CD14-positive monocyte (primary cell): ENCODE measurements at regions of chr2 and their contacts with region 1.

Region 1: GRCh38 chr2:233075966-233076339 is 15.8 kb downstream of the INPP5D start:
- DNase-seq: peak; percentile 64 to 76 (median 70)
- H3K4me3 ChIP-seq: peak overlapping the region in 1 of 3 experiments; percentile 55
- H3K4me3 Mint-ChIP-seq: no peak overlapping the region
- H3K27ac ChIP-seq: peak overlapping the region; percentile 64 to 82
- H3K27ac Mint-ChIP-seq: no peak overlapping the region
- H3K4me1 ChIP-seq: peaks cover 75 to 85% of the 10 kb centered on the region in 2 donors
- H3K4me1 Mint-ChIP-seq: peaks cover 34% of the 10 kb centered on the region
- H3K27me3 ChIP-seq: no peaks in the 10 kb centered on the region
- H3K27me3 Mint-ChIP-seq: no peaks in the 10 kb centered on the region
- CTCF ChIP-seq: no peak

Region 2: GRCh38 chr2:233089851-233090250 is 13.9 kb after region 1 on chr2:
- intact Hi-C with region 1: loop called (anchors 2 kb)
- DNase-seq: no peak
- H3K4me3 ChIP-seq: no peak overlapping the region
- H3K4me3 Mint-ChIP-seq: no peak overlapping the region
- H3K27ac ChIP-seq: peak overlapping the region in 1 of 2 donors; percentile 95
- H3K27ac Mint-ChIP-seq: peak overlapping the region in 3 of 7 donors; percentile 33 to 75 (median 54)
- H3K4me1 ChIP-seq: peaks cover 80 to 83% of the 10 kb centered on the region in 2 donors
- H3K4me1 Mint-ChIP-seq: peaks cover 86% of the 10 kb centered on the region
- H3K27me3 ChIP-seq: no peaks in the 10 kb centered on the region
- H3K27me3 Mint-ChIP-seq: peaks cover 0 to 1% (median 0%) of the 10 kb centered on the region in 3 donors
- CTCF ChIP-seq: no peak

Region 3: GRCh38 chr2:233142355-233142897 is 66.5 kb after region 1 on chr2:
- intact Hi-C with region 1: no loop called
- DNase-seq: no peak
- H3K4me3 ChIP-seq: no peak overlapping the region
- H3K4me3 Mint-ChIP-seq: no peak overlapping the region
- H3K27ac ChIP-seq: peak overlapping the region in 1 of 2 donors; percentile 57
- H3K27ac Mint-ChIP-seq: peak overlapping the region in 5 of 7 donors; percentile 10 to 75 (median 44)
- H3K4me1 ChIP-seq: no peaks in the 10 kb centered on the region
- H3K4me1 Mint-ChIP-seq: no peaks in the 10 kb centered on the region
- H3K27me3 ChIP-seq: no peaks in the 10 kb centered on the region
- H3K27me3 Mint-ChIP-seq: no peaks in the 10 kb centered on the region
- CTCF ChIP-seq: no peak

Region 4: DNA sequence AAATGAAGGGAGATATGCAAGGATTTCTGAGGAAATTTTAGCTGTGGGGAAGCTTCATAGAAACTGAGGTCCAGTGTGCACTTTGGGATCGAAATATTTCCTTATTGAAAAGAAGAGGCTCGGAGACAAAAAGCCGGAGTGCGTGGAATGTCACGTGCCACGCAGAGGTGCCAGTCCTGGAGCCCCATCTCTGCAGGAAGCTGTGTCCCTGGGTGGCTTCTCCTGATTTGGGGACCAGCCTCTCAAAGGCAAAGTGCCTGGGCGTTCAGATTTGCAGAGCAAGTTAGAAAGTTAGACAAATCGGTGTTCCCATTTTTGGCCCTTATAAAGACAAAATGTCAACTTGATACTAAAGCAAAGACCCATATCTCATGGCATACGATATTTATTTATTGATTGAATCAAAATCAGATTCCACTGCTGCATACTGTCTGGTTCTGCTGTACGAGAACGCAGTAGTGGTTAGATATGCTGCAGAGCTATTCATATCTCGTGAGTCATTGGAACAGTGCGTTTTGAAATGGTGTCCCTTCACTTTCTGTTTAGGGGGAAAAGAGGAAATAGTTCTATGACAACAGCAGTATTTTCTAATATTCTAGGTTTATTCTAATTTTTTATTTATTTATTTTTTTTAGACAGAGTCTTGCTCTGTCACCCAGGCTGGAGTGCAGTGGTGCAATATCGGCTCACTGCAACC is 166.4 kb after region 1 on chr2:
- intact Hi-C with region 1: loop called in 1 of 2 experiments (anchors 5 kb)
- DNase-seq: peak; percentile 85 to 94 (median 91)
- H3K4me3 ChIP-seq: peak overlapping the region in 1 of 3 experiments; percentile 61
- H3K4me3 Mint-ChIP-seq: peak overlapping the region; percentile 16 to 63
- H3K27ac ChIP-seq: peak overlapping the region; percentile 72 to 86
- H3K27ac Mint-ChIP-seq: peak overlapping the region; percentile 88 to 95 (median 94)
- H3K4me1 ChIP-seq: peaks cover 47 to 49% of the 10 kb centered on the region in 2 donors
- H3K4me1 Mint-ChIP-seq: peaks cover 50% of the 10 kb centered on the region
- H3K27me3 ChIP-seq: no peaks in the 10 kb centered on the region
- H3K27me3 Mint-ChIP-seq: peaks cover 0 to 5% (median 2%) of the 10 kb centered on the region in 3 donors
- CTCF ChIP-seq: no peak

Region 5: DNA sequence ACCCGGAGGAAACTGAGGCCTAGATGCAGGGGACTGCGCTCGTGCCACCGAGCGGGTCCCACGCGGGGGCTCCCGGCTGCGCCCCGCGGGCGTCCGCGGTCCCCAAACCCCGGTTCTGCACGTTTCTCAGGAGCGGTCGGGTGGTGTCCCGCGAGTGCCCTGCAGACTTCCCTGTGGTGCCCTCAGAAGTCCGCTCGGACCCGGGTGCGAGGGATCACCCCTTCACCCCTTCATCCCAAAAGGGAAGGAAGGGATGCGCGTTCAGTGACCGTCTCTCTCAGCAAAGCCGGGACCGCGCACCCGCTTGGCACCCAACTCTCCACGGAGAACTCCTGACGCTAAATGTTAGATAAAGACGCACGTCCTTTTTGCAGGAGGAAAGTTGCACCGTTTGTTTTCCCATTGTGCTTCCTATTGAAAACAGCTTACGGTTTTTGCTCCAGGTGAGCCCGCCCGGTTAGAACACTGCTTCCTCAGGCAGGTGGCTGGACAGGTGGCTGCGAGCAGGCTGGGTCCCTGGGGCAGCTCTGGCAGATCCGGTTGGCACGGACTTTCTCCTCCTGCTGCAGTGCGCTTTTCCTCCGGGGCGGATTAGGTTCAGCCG is 279.1 kb after region 1 on chr2:
- intact Hi-C with region 1: loop called in 1 of 2 experiments (anchors 5 kb)
- DNase-seq: peak in 1 of 3 donors; percentile 20
- H3K4me3 ChIP-seq: peak overlapping the region; percentile 63 to 93 (median 78)
- H3K4me3 Mint-ChIP-seq: peak overlapping the region; percentile 91 to 93
- H3K27ac ChIP-seq: peak overlapping the region in 1 of 2 donors; percentile 68
- H3K27ac Mint-ChIP-seq: peak overlapping the region in 6 of 7 donors; percentile 76 to 89 (median 80)
- H3K4me1 ChIP-seq: peaks cover 83 to 90% of the 10 kb centered on the region in 2 donors
- H3K4me1 Mint-ChIP-seq: peaks cover 87% of the 10 kb centered on the region
- H3K27me3 ChIP-seq: no peaks in the 10 kb centered on the region
- H3K27me3 Mint-ChIP-seq: peaks cover 0 to 2% (median 0%) of the 10 kb centered on the region in 3 donors
- CTCF ChIP-seq: no peak